GM10248 (cell line): ENCODE measurements at regions of chr18 and their contacts with region 1.

Region 1: GRCh38 chr18:4106407-4107033 is 348.6 kb downstream of the DLGAP1 start:
- DNase-seq: peak; percentile 35
- CTCF ChIP-seq: peak; percentile 66

Region 2: DNA sequence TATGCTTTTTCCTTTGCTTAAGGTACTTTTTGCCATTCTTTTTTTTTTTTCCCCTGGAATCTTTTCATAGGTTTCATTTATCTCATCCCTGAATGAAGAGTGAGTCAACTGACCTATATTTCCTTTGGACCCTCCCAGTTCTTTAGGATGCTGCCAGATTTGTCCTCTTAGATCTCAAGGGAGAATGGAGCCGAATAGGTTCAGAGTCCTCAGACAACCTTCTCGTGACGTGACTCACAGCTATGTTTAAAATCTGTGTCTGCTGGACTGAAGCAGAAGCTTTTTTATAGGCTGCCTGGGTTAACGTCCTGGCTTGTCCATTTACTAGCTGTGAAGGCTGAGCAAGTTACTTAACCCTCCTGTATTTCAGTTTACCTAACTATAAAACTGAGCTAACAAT is 10.0 kb before region 1 on chr18:
- CTCF ChIA-PET with region 1: interaction called, 25 read pairs
- POLR2A ChIA-PET with region 1: no interaction called
- DNase-seq: no peak
- CTCF ChIP-seq: no peak

Region 3: GRCh38 chr18:4119813-4120212 is 13.3 kb after region 1 on chr18:
- CTCF ChIA-PET with region 1: interaction called, 42 read pairs
- POLR2A ChIA-PET with region 1: no interaction called
- DNase-seq: no peak
- CTCF ChIP-seq: peak; percentile 8

Region 4: GRCh38 chr18:5021558-5021957 is 915.0 kb after region 1 on chr18:
- CTCF ChIA-PET with region 1: interaction called, 35 read pairs
- POLR2A ChIA-PET with region 1: no interaction called
- DNase-seq: no peak
- CTCF ChIP-seq: no peak

Region 5: DNA sequence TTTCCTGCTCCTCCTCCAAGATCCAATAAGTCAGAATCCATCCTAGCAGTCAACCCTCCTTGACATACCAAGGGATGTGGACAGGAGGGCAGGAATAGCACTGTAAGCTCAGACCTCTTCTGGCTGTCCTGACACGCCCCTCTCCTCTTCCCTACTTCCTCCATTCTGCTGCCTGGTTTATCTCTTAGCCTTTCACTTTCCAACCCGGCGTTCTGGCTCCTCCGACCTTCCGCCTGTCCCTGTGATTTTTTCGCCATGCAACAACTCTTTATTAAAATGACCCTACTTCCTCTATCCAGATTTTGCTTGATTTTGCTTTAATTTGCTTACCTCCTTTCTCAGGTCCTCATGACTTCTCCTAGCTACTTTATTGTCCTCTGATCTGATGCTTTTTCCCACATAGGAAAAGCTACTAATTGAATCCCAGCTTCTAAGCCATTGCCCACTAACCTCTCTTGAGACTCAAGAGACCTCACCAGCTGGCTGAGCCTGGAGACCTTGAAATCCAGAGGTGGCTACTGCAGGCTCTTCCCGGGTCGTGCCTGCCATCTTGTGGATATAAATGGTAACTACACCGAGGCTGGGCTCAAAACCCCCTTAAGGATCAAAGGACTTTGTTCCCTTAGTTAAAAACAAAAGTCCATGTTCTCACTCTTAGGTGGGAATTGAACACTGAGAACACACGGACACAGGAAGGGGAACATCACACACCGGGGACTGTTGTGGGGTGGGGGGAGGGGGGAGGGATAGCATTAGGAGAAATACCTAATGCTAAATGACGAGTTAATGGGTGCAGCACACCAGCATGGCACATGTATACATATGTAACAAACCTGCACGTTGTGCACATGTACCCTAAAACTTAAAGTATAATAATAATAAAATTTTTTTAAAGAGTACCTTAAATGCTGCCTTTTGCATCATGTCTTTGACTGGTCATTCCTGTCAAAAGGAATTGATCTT is 951.1 kb after region 1 on chr18:
- CTCF ChIA-PET with region 1: interaction called, 72 read pairs
- POLR2A ChIA-PET with region 1: no interaction called
- DNase-seq: peak; percentile 53
- CTCF ChIP-seq: peak; percentile 81